ENCODE measurements at regions of chr11 and their contacts with region 1.

Region 1: GRCh38 chr11:101323997-101324396 is 194.4 kb upstream of the PGR start:
- DNase-seq: no peak
- ATAC-seq: peak; percentile 60

Region 2: DNA sequence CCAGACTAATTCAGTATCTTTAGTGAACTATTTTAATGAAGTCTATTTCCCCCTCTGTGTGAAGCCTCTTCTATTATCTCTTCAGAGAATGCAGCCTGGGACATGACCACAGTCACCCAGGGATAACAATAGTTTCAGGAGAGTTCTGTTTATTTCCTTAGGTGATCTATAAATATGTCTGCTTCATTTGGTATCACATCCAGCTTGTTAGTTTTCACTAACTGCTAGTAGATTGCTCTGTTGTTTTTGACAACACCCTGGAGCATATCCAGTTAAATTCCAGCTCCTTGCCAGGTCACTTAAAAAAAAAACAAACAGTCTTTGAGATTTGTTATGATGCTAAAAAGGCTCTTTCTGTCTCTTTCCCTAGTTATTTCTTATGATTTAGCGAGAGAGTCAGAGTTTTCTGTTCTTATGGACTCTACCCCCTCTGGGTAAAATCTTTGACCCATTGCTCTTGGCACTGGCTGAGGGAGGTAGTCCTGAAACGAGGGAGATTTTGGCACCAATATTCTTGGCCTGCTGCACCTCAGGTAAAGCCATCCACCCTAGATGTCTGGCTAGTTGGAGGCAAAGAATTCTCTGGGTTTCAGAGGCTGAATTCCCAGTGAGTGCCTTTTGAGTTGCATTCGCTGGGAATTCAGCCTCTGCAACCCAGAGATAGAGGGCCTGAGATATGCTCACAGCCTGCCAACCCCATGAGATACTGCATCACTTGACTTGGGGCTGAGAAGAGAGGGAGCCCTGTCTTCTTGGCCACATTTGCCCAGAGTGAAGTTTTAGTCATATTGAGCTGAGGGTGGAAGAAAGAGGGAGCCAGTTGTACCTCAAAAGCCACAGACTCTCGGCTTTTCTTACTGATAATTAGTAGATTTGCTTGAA is 353.5 kb before region 1 on chr11:
- intact Hi-C with region 1: loop called (anchors 5 kb)
- DNase-seq: no peak
- ATAC-seq: peak; percentile 83

Region 3: GRCh38 chr11:100994966-100995365 is 329.0 kb before region 1 on chr11:
- intact Hi-C with region 1: loop called (anchors 5 kb)
- DNase-seq: no peak
- ATAC-seq: no peak

Region 4: DNA sequence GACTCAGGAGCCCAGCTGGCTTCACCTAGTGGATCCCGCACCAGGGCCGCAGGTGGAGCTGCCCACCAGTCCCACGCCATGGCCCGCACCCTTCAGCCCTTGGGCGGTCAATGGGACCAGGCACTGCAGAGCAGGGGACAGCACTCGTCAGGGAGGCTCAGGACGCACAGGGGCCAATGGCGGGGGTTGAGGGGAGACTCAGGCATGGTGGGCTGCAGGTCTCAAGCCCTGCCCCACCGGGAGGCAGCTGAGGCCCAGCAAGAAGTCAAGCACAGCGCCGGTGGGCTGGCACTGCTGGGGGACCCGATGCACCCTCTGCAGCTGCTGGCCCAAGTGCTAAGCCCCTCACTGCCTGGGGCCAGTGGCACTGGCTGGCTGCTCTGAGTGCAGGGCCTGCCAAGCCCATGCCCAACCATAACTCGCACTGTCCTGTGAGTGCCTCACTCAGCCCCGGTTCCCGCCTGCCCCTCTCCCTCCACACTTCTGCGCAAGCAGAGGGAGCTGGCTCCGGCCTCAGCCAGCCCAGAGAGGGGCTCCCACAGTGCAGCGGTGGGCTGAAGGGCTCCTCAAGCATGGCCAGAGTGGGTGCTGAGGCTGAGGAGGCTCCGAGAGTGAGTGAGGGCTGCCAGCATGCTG is 82.7 kb before region 1 on chr11:
- intact Hi-C with region 1: no loop called
- DNase-seq: no peak
- ATAC-seq: no peak

Measured in Right ventricle myocardium inferior (tissue), 1 donor.